ENCODE measurements at regions of chr2 and their contacts with region 1.

Region 1: GRCh38 chr2:132547074-132547687 is 122.8 kb downstream of the LYPD1 start:
- DNase-seq: peak; percentile 78
- ATAC-seq: no peak
- H3K4me3 Mint-ChIP-seq: no peak overlapping the region
- H3K27ac Mint-ChIP-seq: no peak overlapping the region
- H3K4me1 Mint-ChIP-seq: no peaks in the 10 kb centered on the region
- H3K27me3 Mint-ChIP-seq: peaks cover 2% of the 10 kb centered on the region

Region 2: GRCh38 chr2:132267105-132267497 is 280.1 kb before region 1 on chr2:
- CTCF ChIA-PET with region 1: no interaction called
- POLR2A ChIA-PET with region 1: no interaction called
- intact Hi-C with region 1: loop called in 1 of 2 experiments (anchors 2 kb)
- DNase-seq: no peak
- ATAC-seq: no peak
- H3K4me3 Mint-ChIP-seq: no peak overlapping the region
- H3K27ac Mint-ChIP-seq: no peak overlapping the region
- H3K4me1 Mint-ChIP-seq: no peaks in the 10 kb centered on the region
- H3K27me3 Mint-ChIP-seq: no peaks in the 10 kb centered on the region

Region 3: DNA sequence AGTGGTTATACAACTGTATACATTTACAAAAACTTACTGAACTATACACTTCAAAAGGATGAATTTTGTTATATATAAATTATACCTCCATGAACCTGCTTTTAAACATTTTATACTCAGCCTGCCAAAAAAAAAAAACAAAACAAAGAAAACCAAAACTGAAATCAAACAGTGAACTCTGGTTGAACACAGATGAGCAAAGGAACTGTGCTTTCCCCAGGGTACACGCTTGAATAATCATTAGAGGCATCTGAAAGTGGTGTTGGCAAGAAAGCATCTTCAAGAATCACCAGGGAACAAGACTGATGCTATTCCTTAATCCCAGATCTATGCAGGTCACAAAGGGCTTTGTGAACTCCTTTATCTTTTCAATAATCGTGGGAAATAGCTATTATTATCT is 199.9 kb after region 1 on chr2:
- CTCF ChIA-PET with region 1: no interaction called
- POLR2A ChIA-PET with region 1: no interaction called
- intact Hi-C with region 1: no loop called
- DNase-seq: no peak
- ATAC-seq: no peak
- H3K4me3 Mint-ChIP-seq: no peak overlapping the region
- H3K27ac Mint-ChIP-seq: no peak overlapping the region
- H3K4me1 Mint-ChIP-seq: no peaks in the 10 kb centered on the region
- H3K27me3 Mint-ChIP-seq: no peaks in the 10 kb centered on the region

Region 4: GRCh38 chr2:133171393-133172004 is 624.3 kb after region 1 on chr2:
- CTCF ChIA-PET with region 1: interaction called, 3 read pairs
- POLR2A ChIA-PET with region 1: no interaction called
- intact Hi-C with region 1: loop called in 1 of 2 experiments (anchors 1 kb)
- DNase-seq: no peak
- ATAC-seq: no peak
- H3K4me3 Mint-ChIP-seq: no peak overlapping the region
- H3K27ac Mint-ChIP-seq: no peak overlapping the region
- H3K4me1 Mint-ChIP-seq: no peaks in the 10 kb centered on the region
- H3K27me3 Mint-ChIP-seq: peaks cover 6% of the 10 kb centered on the region

Region 5: DNA sequence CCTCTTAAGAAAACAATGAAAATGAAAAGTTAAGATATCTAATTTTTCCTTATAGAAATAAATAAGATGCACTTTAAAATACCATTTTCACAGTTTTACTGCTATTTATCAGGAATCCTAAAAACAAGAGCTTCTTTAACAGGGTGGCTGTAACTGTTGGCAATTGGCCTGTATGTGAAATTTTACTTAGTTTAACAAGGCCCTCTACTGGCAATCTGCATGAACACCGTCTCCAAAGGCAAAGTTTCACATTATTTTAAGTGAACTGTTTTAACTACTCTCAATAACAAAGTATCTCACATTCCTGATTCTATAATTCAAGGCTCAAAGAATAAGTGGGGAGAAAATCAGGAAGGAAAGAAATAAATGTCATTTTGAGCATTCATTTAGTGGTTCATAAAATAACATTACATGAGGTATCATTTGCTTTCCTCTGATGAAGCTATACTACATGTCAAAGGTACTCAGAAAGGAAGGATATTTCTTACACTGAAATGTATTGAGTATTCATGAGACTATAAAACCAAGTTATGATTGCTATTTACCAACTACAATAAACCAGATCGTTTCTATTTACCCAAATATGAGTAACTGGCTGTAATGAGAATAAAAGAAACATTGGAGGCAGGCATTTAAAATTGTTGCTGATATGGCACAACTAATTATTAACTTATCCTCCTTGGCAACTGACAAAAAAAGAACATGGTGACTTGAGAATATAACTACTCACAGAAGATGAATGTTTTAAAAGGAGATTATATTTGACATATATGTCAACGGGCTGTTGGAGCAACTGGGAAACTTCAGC is 1014.1 kb after region 1 on chr2:
- CTCF ChIA-PET with region 1: interaction called, 6 read pairs
- POLR2A ChIA-PET with region 1: no interaction called
- intact Hi-C with region 1: loop called in 1 of 2 experiments (anchors 5 kb)
- DNase-seq: no peak
- ATAC-seq: no peak
- H3K4me3 Mint-ChIP-seq: no peak overlapping the region
- H3K27ac Mint-ChIP-seq: no peak overlapping the region
- H3K4me1 Mint-ChIP-seq: no peaks in the 10 kb centered on the region
- H3K27me3 Mint-ChIP-seq: peaks cover 5% of the 10 kb centered on the region

Region 6: DNA sequence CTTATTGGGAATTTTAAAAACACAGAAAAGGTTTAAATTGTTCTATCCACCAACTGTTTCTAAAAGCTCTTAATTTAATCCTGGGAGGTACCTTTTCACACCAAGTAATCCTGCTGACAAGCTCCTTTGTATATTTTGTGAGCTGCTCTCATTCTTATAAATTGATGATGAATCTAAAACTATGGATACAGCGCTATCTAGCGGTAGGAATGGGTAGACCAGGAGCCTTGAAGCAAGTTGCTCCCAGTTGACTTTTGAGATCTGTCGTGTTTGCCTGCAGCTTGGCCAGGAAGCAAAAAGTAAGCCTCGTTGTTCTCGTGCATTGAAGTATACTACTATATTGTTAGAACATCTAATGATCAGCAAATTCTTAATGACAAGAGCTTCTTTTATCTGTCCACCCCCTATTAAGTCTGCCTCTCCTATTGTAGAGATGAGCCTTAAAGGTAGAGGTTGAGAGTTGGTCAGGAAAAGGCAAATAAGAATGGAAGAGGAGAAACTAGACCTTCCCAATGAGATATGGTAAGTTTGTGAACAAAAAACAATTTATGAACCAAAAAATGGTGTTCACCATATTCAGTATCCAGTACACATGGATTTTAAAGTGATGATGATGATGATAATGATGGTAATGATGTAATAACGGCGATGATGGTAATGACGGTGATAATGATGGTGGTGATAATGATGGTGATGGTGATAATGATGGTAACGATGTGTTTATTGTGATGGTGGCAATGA is 1233.1 kb after region 1 on chr2:
- CTCF ChIA-PET with region 1: interaction called, 6 read pairs
- POLR2A ChIA-PET with region 1: no interaction called
- intact Hi-C with region 1: loop called in 1 of 2 experiments (anchors 1 kb)
- DNase-seq: peak; percentile 50
- ATAC-seq: no peak
- H3K4me3 Mint-ChIP-seq: no peak overlapping the region
- H3K27ac Mint-ChIP-seq: no peak overlapping the region
- H3K4me1 Mint-ChIP-seq: no peaks in the 10 kb centered on the region
- H3K27me3 Mint-ChIP-seq: no peaks in the 10 kb centered on the region

Region 7: GRCh38 chr2:133844214-133844892 is 1297.2 kb after region 1 on chr2:
- CTCF ChIA-PET with region 1: interaction called, 9 read pairs
- POLR2A ChIA-PET with region 1: no interaction called
- intact Hi-C with region 1: loop called (anchors 1 to 2 kb)
- DNase-seq: peak; percentile 71
- ATAC-seq: peak; percentile 80
- H3K4me3 Mint-ChIP-seq: no peak overlapping the region
- H3K27ac Mint-ChIP-seq: no peak overlapping the region
- H3K4me1 Mint-ChIP-seq: no peaks in the 10 kb centered on the region
- H3K27me3 Mint-ChIP-seq: peaks cover 2% of the 10 kb centered on the region

Measured in activated CD4-positive, alpha-beta T cell treated with anti-CD3 and anti-CD28 coated beads for 36 hours (primary cell).